HEK293T (cell line): ENCODE measurements at regions of chr16 and their contacts with region 1.

Region 1: DNA sequence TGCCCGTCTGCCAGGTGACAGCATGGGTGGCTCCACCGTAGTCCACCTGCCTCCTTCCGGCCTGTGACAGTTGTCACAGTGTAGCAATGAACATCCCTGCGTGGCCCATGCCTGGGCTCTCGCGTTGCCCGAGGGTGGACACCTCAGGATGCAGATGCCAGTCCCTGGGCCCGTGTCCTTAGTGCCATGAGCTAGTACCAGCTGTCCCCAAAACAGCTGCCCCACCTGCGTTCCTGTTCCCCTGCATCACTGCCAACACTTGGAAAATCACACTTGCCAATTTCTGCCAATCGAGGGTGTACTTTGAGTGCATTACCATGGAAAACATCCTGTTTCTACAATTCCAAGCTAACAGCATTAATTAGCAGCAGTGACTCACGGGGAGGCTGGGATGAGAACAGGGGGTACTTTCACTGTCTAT is 9.0 kb upstream of the C16orf95 start:
- DNase-seq: no peak

Region 2: GRCh38 chr16:86882586-86883280 is 443.4 kb before region 1 on chr16:
- CTCF ChIA-PET with region 1: no interaction called
- POLR2A ChIA-PET with region 1: no interaction called
- DNase-seq: no peak

Region 3: DNA sequence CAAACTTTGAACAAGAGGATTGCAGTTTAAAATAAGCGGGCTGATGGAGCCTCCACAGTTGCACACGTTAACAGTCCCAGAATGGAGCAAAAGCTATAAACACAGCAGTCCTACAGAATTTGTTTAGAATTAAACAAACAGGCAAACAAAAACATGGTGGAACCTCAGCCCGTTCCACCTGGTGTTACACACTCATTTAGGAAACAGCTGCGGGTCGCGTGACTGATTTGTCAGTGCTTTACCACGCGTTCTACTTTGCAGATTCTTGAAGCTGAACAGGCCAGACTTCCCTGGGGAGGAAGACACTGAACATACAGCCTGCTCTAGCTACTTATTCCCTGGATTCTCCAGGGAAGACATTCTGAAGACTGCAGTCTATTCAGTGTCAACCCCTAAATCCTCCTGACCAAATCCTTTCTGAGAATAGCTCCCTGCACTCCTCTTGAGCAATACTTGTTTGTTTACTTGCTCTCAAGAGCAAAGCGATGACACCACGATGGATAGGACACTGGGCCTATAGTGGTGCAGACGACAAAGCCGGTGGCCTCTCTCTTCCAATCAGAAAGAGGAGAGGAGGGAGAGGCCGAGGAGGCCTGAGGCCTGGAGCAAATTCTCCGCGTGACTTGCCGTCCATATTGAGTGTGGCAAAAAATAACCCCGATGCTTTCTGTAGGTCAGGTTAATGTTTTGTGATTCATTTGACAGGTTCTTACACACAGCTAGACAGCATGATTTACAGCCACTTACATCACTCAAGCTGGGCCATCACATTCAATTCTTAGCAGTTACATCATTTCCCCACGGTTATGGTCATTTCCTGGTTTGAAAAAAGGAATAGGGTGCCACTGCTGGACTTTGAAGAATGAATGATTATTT is 62.0 kb after region 1 on chr16:
- CTCF ChIA-PET with region 1: interaction called, 4 read pairs
- POLR2A ChIA-PET with region 1: interaction called, 10 read pairs
- DNase-seq: peak; percentile 78

Region 4: GRCh38 chr16:87404764-87405625 is 78.8 kb after region 1 on chr16:
- CTCF ChIA-PET with region 1: no interaction called
- POLR2A ChIA-PET with region 1: no interaction called
- DNase-seq: no peak